SK-N-SH (cell line): ENCODE measurements at regions of chrX and their contacts with region 1.

Region 1: DNA sequence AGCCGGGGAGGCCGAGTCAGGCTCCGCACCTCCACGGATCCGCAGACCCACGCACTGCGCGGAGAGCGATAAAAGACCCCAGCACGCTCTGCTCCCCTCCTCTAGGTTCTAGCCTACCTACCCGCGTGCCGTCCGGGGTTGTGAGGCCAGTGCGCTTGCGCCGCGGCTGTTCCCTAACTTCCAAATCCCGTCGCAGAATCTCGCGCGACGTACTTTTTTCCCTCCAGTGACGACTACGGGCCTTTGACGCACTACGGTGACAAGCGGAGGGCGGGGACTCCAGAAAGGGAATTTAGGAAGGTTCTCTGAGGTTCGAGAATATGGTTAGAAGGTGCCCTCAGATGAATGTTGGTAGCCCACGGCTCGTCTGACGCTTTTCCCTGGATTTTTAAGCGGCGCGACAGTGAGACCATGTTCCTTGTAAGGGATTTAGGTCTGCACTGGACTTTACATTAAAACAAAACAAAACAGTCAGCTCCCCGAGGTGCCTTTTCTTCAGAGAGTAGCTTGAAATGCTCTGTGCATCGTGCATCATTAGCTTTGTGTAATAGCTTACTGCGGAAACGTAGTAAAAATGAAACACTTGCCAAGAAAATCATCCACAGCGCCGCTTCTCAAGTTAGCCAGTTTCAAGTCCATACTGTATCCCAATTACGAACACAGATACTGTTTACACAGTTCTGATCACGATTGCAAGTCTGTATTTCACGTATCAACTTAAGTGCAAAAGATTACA is at the start of gene NKRF:
- DNase-seq: peak; percentile 85
- H3K4me3 ChIP-seq: peak within 1 kb of the TSS; percentile 65 to 70
- H3K27ac ChIP-seq: peak within 1 kb of the TSS; percentile 61 to 86; a peak in 3 of 4 replicates
- H3K4me1 ChIP-seq: no peaks in the 10 kb centered on the region; a peak in 1 of 4 replicates
- H3K27me3 ChIP-seq: peaks cover 10% of the 10 kb centered on the region; the same call in 1 of the 2 replicates
- CTCF ChIP-seq: no peak
- EP300 ChIP-seq: no peak
- RAD21 ChIP-seq: no peak
- polyA plus RNA-seq, gene NKRF: 3.2 and 3.7 TPM in 2 replicates

Region 2: GRCh38 chrX:119482481-119483480 is 123.7 kb before region 1 on chrX:
- CTCF ChIA-PET with region 1: no interaction called
- POLR2A ChIA-PET with region 1: no interaction called
- DNase-seq: peak; percentile 55
- H3K4me3 ChIP-seq: peak overlapping the region; percentile 6 to 37; a peak in 1 of 4 replicates
- H3K27ac ChIP-seq: no peak overlapping the region
- H3K4me1 ChIP-seq: peaks cover 0 to 6% of the 10 kb centered on the region in 2 experiments; a peak in 1 of 4 replicates
- H3K27me3 ChIP-seq: peaks cover 26% of the 10 kb centered on the region; the same call in 1 of the 2 replicates
- CTCF ChIP-seq: peak; percentile 53
- EP300 ChIP-seq: no peak
- RAD21 ChIP-seq: no peak

Region 3: DNA sequence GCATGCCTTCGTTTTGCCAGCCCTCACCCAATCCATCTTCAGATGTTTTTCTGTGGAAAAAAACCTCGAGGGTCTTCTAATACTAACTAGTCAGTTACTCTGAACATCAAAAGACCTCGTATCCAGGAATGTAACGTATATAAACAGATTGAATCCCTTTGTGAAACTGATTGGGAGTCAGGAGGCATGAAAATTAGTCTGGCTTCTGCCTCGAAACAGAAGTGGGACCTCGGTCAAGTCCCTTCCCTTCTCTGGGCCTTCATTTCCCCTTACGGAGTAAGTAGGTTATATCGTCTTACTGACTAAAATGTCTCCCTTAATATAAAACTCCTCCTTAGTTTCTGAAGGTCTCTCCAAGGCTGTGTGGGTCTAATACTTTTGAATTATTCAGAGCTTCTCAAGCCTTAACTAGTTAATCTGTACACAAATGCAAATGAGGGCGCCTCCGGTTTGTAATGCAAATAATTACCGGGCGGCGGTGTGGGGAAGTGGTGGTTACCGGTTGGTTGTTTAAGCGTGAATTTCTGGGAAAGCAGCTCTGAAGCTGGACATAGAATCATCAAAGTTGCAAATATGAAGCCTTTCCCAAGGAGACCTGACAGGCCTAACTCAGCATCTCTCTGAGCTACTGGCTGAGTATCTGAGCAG is 11.2 kb after region 1 on chrX:
- CTCF ChIA-PET with region 1: interaction called, 17 read pairs
- POLR2A ChIA-PET with region 1: no interaction called
- DNase-seq: no peak
- H3K4me3 ChIP-seq: no peak overlapping the region
- H3K27ac ChIP-seq: no peak overlapping the region
- H3K4me1 ChIP-seq: no peaks in the 10 kb centered on the region
- H3K27me3 ChIP-seq: peaks cover 4% of the 10 kb centered on the region; the same call in 1 of the 2 replicates
- CTCF ChIP-seq: no peak
- EP300 ChIP-seq: no peak
- RAD21 ChIP-seq: no peak

Region 4: GRCh38 chrX:119624951-119625668 is 18.7 kb after region 1 on chrX:
- CTCF ChIA-PET with region 1: interaction called, 17 read pairs
- POLR2A ChIA-PET with region 1: no interaction called
- DNase-seq: no peak
- H3K4me3 ChIP-seq: no peak overlapping the region
- H3K27ac ChIP-seq: no peak overlapping the region
- H3K4me1 ChIP-seq: no peaks in the 10 kb centered on the region
- H3K27me3 ChIP-seq: peaks cover 4% of the 10 kb centered on the region; the same call in 1 of the 2 replicates
- CTCF ChIP-seq: no peak
- EP300 ChIP-seq: no peak
- RAD21 ChIP-seq: no peak

Region 5: DNA sequence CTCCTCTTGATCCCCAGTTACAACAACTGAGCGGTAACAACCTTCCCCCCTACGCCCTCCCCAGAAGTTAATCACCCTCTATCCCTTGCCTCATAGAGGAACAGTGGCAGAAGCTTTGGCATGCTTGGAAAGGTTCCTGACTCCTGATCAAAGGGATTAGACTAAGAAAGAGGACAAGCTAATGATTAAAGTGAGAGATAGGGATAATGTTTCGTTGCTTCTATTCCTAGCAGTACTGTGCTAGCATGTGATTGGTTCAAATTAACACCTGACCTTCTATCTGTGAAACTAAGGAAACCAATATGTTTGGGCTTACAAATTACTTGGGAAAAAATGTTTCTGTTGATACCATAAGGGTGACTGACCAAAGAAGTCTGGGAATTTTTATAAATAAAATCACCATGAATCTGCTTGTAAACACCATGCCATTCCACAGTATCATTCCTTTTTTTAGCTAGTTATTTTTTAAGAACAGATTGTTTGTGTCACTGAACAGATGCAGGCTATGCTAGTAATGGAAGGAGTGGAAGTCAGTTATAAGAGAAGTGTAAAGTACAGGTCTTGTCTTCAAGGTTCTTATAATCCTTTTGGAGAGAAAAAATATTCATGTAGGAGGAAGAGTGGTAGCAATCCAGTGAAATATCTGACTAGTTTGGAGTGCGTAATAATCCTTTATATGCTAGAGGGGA is 744.1 kb after region 1 on chrX:
- CTCF ChIA-PET with region 1: no interaction called
- POLR2A ChIA-PET with region 1: no interaction called
- DNase-seq: no peak
- H3K4me3 ChIP-seq: no peak overlapping the region
- H3K27ac ChIP-seq: no peak overlapping the region
- H3K4me1 ChIP-seq: no peaks in the 10 kb centered on the region
- H3K27me3 ChIP-seq: no peaks in the 10 kb centered on the region; the same call in 1 of the 2 replicates
- CTCF ChIP-seq: no peak
- EP300 ChIP-seq: no peak
- RAD21 ChIP-seq: no peak

Region 6: GRCh38 chrX:120718969-120719368 is 1112.5 kb after region 1 on chrX:
- CTCF ChIA-PET with region 1: no interaction called
- POLR2A ChIA-PET with region 1: no interaction called
- DNase-seq: no peak
- H3K4me3 ChIP-seq: no peak overlapping the region
- H3K27ac ChIP-seq: no peak overlapping the region
- H3K4me1 ChIP-seq: no peaks in the 10 kb centered on the region
- H3K27me3 ChIP-seq: no peaks in the 10 kb centered on the region
- CTCF ChIP-seq: no peak
- EP300 ChIP-seq: no peak
- RAD21 ChIP-seq: no peak